GM18951 (cell line): ENCODE measurements at regions of chr14 and their contacts with region 1.

Region 1: GRCh38 chr14:22653012-22653621 is 9.0 kb upstream of the OR6J1 start:
- POLR2A ChIP-seq: no peak

Region 2: DNA sequence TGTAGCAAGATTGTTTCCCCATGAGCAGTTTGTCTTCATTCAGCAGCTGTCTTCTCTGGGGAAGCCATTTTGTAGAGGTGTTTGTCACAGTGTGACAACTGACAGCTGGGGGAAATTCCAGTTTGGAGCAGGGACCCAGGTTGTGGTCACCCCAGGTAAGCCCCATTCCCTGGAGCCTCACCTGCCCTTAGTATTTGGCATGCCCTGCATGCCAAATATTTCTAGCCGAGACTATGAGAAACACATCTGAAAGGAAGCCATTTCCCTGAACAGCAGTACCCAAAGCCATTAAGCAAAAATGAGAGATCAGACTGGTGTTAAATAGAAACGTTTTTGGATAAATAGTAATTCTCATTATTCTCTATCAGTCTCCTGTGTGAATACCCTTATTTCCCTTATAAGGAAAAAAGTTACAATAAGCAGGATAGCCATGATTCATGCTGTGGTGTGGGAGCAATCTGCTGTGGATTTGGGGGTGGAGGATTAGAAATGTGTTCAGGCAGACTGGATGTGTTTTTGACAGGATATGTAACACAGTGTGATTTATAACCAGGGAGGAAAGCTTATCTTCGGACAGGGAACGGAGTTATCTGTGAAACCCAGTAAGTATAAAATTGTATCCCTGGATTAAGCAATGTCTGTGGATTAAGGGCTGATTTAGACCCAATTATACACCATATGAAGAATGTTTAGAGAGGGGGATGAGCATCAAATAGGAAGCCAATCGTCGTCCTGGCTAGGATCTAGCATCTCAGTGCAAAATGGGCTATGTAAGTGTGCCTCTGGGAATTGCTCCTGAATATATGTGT is 133.0 kb before region 1 on chr14:
- in situ Hi-C with region 1: no loop called
- POLR2A ChIP-seq: no peak

Region 3: DNA sequence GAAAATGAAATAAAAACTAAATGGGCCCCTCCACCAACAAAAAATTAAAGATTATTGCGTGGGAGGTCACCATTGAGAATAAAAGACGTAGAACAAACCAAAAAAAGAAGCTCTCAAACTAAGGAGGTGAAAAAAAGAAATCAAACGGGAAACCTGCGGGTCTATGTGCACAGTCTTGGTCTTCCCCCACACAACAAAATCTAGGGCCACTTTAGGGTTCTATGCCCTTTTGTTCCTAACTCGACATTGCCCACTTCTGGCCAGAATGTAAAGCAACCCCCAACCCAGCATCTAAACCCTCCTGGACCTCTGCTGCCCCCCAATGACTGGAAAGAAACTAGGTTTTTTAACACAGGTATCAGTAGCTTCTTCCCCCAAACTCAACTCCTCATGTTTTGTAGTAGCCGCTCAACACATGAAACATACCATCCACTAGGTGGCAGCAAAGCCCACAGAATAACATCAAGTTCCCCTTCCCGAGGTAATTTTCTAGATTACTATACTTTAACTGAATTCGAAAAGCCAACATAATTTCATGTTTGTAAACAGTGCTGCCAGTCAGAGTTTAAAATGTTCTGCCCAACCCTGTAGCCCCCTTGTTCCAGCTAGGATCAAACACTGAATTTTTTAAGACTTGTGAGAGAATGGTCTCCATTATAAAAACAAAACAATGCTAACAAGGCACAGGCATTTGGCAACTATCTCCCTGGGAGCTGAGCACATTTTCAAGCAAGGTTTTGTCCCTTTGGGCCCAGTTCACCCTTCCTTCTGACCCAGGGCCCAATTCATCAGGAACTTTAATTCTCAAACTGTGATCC is 82.8 kb before region 1 on chr14:
- in situ Hi-C with region 1: loop called (anchors 5 kb)
- POLR2A ChIP-seq: no peak

Region 4: DNA sequence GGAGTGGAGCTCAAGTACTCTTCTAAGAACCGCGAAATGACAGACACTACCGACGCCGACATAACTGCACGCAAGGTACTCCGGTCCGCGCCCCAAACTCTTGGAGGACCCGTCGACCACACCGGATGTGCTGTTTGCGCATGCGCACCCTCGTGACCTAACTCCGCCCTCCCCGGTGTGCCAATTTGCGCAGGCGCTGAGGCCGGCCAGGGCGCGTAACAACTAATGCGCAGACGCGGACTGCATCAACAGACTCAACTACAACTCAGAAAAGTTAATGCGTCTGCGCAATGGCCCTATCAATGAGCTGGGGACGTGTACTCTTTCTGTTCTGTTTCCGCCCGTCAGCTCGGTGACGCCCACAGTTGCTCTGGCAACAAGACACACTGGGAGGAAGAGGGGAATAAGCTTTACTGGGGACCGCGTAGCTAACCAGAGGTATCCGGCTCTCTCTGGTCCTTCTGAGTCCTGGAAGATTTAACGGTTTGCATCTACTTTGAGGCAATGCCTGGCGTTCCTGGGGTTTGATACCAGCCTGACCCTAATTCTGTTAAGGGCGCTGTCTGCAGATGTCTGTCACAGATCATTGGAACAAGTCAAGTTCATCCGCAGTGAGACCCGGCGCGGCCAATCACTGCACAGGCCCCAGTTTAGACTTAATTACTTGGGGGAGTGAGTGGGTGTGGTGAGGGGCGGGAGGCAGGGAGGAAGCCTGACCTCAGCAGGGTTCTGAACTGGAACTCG is 63.8 kb before region 1 on chr14 and contains the start of gene DAD1:
- in situ Hi-C with region 1: no loop called
- POLR2A ChIP-seq: peak; percentile 97